Ascending aorta (tissue), 2 donors: ENCODE measurements at regions of chr1 and their contacts with region 1.

Region 1: DNA sequence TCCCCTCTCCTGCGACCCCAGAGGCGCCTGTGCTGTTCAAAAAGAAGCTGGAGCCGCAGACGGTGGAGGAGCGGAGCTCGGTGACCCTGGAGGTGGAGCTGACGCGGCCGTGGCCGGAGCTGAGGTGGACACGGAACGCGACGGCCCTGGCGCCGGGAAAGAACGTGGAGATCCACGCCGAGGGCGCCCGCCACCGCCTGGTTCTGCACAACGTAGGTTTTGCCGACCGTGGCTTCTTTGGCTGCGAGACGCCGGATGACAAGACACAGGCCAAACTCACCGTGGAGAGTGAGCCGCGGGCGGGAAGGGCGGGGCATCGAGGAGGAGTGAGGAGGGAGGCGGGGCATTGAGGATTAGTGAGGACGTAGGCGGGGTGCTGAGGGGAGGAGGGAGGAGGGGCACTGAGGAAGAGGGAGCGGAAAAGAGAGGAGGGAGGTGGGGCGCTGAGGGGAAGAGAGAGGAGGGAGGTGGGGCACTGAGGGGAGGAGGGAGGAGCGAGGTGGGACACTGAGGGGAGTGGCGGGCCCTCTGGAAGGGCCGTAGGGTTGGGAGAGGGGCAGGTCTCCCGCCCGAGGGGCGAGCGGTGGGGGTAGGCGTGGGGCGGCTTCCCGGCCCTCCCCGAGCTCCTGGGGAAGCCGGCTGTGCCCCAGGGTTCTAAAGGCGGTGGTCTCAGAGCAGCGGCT is 68.0 kb downstream of the OBSCN start:
- DNase-seq: peak; percentile 73 to 93
- H3K4me3 ChIP-seq: peak overlapping the region; percentile 68 to 88
- H3K27ac ChIP-seq: peak overlapping the region; percentile 47 to 76
- H3K4me1 ChIP-seq: peaks cover 0 to 10% of the 10 kb centered on the region in 2 donors
- H3K27me3 ChIP-seq: no peaks in the 10 kb centered on the region
- CTCF ChIP-seq: no peak

Region 2: DNA sequence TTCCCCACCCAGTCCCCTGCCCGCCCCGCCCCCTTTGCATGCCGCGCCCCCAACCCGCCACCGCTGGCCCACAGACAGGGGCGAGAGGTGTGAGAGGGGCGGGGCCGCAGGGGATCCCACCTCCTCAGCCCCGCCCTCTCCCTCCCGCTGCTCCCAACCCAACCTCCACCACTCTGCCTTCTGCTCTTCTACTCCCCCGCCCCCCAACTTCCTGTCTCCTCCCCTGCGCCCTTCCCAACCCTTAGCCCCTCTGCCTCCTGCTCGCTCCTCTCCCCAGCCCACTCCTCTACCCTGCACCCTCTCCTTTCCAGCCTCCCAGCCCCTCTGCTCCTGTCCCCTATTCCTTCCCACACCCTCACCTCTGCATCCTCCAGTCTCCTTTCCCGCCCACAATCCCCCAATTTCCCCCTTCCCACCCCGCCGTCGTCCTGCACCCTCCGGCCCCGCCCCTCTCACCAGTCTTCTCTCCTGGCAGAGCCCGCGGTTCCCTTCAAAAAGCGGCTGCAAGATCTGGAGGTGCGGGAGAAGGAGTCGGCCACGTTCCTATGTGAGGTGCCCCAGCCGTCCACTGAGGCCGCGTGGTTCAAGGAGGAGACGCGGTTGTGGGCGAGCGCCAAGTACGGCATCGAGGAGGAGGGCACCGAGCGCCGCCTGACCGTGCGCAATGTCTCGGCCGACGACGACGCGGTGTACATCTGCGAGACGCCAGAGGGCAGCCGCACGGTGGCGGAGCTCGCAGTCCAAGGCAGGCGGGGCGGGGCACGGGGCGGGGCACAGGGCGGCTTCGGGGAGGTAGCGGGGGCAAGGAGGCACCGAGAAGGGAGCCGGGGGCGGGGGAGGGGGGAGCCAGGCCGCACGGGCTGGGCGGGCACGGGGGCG is 62.7 kb before region 1 on chr1:
- intact Hi-C with region 1: loop called (anchors 5 kb)
- DNase-seq: peak; percentile 38 to 91
- H3K4me3 ChIP-seq: peak overlapping the region; percentile 48 to 73
- H3K27ac ChIP-seq: peak overlapping the region in 1 of 2 donors; percentile 32
- H3K4me1 ChIP-seq: peaks cover 8 to 14% of the 10 kb centered on the region in 2 donors
- H3K27me3 ChIP-seq: no peaks in the 10 kb centered on the region
- CTCF ChIP-seq: peak; percentile 33 to 70 (median 50)

Region 3: DNA sequence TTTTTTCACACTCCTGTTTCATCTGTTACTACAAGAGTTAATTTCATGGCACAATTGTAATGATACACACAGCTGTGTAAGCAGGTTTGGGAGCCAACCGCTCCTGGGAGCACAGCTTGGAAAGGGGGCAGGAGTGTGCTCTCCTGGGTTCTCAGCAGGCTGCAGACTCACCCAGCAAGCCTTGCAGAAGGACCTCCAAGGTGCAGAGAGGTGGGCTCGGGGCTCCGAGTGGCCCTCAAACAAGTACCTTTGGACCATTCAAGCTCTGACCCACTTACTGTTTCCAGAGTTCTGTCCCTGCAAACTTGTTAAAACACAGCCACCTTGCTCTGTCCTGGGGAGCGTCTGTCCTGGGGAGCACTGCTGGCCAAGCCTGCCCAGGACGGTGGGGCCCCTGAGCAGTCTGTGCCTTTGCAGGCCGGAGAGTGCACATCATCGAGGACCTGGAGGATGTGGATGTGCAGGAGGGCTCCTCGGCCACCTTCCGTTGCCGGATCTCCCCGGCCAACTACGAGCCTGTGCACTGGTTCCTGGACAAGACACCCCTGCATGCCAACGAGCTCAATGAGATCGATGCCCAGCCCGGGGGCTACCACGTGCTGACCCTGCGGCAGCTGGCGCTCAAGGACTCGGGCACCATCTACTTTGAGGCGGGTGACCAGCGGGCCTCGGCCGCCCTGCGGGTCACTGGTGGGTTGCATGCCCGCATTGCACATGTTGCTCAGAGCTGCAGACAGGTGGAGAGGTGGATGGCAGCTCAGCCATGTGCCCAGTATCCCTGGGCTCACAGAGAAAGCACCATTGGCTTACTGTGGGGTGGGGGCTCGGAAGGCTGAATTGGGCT is 10.0 kb after region 1 on chr1:
- intact Hi-C with region 1: no loop called
- DNase-seq: peak in 1 of 2 donors; percentile 50
- H3K4me3 ChIP-seq: no peak overlapping the region
- H3K27ac ChIP-seq: no peak overlapping the region
- H3K4me1 ChIP-seq: no peaks in the 10 kb centered on the region
- H3K27me3 ChIP-seq: no peaks in the 10 kb centered on the region
- CTCF ChIP-seq: no peak